ENCODE measurements at regions of chr1 and their contacts with region 1.

Region 1: GRCh38 chr1:108691942-108692723 is at the start of gene PRPF38B:
- DNase-seq: peak; percentile 92 to 95 (median 94)
- H3K4me3 ChIP-seq: peak within 1 kb of the TSS; percentile 97
- H3K4me3 Mint-ChIP-seq: peak within 1 kb of the TSS; percentile 91 to 100 (median 93)
- H3K27ac ChIP-seq: peak within 1 kb of the TSS; percentile 96
- H3K27ac Mint-ChIP-seq: peak within 1 kb of the TSS; percentile 91 to 100 (median 98)
- H3K4me1 ChIP-seq: peaks cover 40% of the 10 kb centered on the region
- H3K4me1 Mint-ChIP-seq: peaks cover 39 to 50% (median 45%) of the 10 kb centered on the region in 3 donors
- H3K27me3 ChIP-seq: no peaks in the 10 kb centered on the region
- H3K27me3 Mint-ChIP-seq: no peaks in the 10 kb centered on the region
- total RNA-seq, gene PRPF38B: 74.8 to 78.1 TPM

Region 2: GRCh38 chr1:108559215-108560186 is 132.6 kb before region 1 on chr1 and contains the start of gene EEIG2:
- CTCF ChIA-PET with region 1: interaction called, 20 read pairs
- POLR2A ChIA-PET with region 1: interaction called, 32 read pairs
- DNase-seq: peak; percentile 82 to 91 (median 89)
- H3K4me3 ChIP-seq: peak within 1 kb of the TSS; percentile 61
- H3K4me3 Mint-ChIP-seq: peak within 1 kb of the TSS; percentile 91 to 98 (median 95)
- H3K27ac ChIP-seq: peak within 1 kb of the TSS; percentile 44
- H3K27ac Mint-ChIP-seq: peak within 1 kb of the TSS; percentile 81 to 99 (median 94)
- H3K4me1 ChIP-seq: peaks cover 28% of the 10 kb centered on the region
- H3K4me1 Mint-ChIP-seq: peaks cover 34 to 45% (median 40%) of the 10 kb centered on the region in 3 donors
- H3K27me3 ChIP-seq: no peaks in the 10 kb centered on the region
- H3K27me3 Mint-ChIP-seq: no peaks in the 10 kb centered on the region
- total RNA-seq, gene EEIG2: 19.4 to 21.0 TPM

Region 3: GRCh38 chr1:108661030-108661620 is 31.0 kb before region 1 on chr1 and contains the start of gene HENMT1:
- CTCF ChIA-PET with region 1: interaction called, 34 read pairs
- POLR2A ChIA-PET with region 1: interaction called, 118 read pairs
- DNase-seq: peak; percentile 65 to 92 (median 88)
- H3K4me3 ChIP-seq: peak within 1 kb of the TSS; percentile 82
- H3K4me3 Mint-ChIP-seq: peak within 1 kb of the TSS; percentile 87 to 95 (median 88)
- H3K27ac ChIP-seq: peak within 1 kb of the TSS; percentile 94
- H3K27ac Mint-ChIP-seq: peak within 1 kb of the TSS; percentile 95 to 100 (median 98)
- H3K4me1 ChIP-seq: peaks cover 16% of the 10 kb centered on the region
- H3K4me1 Mint-ChIP-seq: peaks cover 35 to 63% (median 53%) of the 10 kb centered on the region in 3 donors
- H3K27me3 ChIP-seq: no peaks in the 10 kb centered on the region
- H3K27me3 Mint-ChIP-seq: no peaks in the 10 kb centered on the region
- total RNA-seq, gene HENMT1: 29.6 to 31.3 TPM

Region 4: DNA sequence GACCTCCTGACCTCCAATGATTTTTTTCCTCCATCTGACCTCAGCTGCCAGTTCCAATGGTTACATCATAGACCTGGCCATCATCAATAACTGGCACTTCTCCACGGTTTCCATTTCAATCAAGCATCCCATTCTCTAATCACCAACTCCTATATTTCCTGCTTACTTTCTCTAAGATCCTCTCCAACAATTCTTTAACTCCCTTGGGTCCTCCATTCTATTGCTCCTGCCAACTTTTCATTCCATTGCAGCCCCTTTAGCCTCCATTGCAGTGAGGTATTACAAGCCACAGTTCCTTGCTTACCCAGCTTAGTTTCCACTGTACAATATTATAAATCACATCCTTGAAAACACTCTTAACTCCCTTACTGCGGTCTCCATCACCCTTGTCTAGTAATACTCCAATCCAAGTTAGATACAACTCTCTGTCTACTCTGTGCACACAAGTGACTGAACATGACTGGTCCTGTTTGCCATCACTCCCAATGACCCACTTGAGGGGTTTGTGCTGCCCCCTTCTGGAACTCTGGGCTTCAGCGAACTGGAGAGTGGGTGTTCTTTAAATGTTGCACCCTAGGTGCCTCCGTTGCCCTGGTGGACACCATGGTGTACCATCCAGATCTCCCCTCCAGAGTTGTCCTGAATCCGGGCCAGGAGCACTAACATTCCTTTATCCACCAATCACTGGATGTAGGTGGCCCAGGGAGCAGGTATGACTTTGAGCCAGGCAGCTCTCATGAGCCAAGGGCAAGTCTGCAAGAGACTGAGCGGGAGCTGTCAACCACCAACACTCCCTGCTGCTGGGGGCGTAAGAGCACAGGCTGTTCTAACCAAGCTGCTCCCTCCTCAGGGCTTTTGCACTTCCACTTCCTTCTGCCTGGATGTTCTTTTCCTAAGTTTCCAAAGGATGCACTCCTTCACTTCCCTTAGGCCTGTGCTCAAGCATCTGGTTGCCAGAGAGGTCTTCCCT is 16.8 kb after region 1 on chr1:
- CTCF ChIA-PET with region 1: interaction called, 50 read pairs
- POLR2A ChIA-PET with region 1: interaction called, 65 read pairs
- DNase-seq: peak; percentile 46 to 81 (median 55)
- H3K4me3 ChIP-seq: no peak overlapping the region
- H3K4me3 Mint-ChIP-seq: peak overlapping the region in 1 of 7 donors; percentile 1
- H3K27ac ChIP-seq: no peak overlapping the region
- H3K27ac Mint-ChIP-seq: peak overlapping the region in 5 of 8 donors; percentile 12 to 62 (median 60)
- H3K4me1 ChIP-seq: peaks cover 26% of the 10 kb centered on the region
- H3K4me1 Mint-ChIP-seq: peaks cover 25 to 33% (median 32%) of the 10 kb centered on the region in 3 donors
- H3K27me3 ChIP-seq: no peaks in the 10 kb centered on the region
- H3K27me3 Mint-ChIP-seq: peaks cover 0 to 3% of the 10 kb centered on the region in 2 donors

Region 5: GRCh38 chr1:108897865-108898720 is 206.0 kb after region 1 on chr1:
- CTCF ChIA-PET with region 1: interaction called, 13 read pairs
- POLR2A ChIA-PET with region 1: interaction called, 3 read pairs
- DNase-seq: peak in 3 of 5 donors; percentile 13 to 46 (median 45)
- H3K4me3 ChIP-seq: no peak overlapping the region
- H3K4me3 Mint-ChIP-seq: no peak overlapping the region
- H3K27ac ChIP-seq: no peak overlapping the region
- H3K27ac Mint-ChIP-seq: no peak overlapping the region
- H3K4me1 ChIP-seq: no peaks in the 10 kb centered on the region
- H3K4me1 Mint-ChIP-seq: no peaks in the 10 kb centered on the region
- H3K27me3 ChIP-seq: no peaks in the 10 kb centered on the region
- H3K27me3 Mint-ChIP-seq: no peaks in the 10 kb centered on the region